ENCODE measurements at regions of chr1 and their contacts with region 1.

Region 1: GRCh38 chr1:223500560-223501425 is 107.6 kb downstream of the CCDC185 start:
- DNase-seq: peak; percentile 99
- ATAC-seq: peak; percentile 88
- H3K4me3 ChIP-seq: no peak overlapping the region
- H3K27ac ChIP-seq: peak overlapping the region; percentile 96
- H3K4me1 ChIP-seq: peaks cover 39% of the 10 kb centered on the region
- H3K27me3 ChIP-seq: no peaks in the 10 kb centered on the region
- CTCF ChIP-seq: no peak

Region 2: DNA sequence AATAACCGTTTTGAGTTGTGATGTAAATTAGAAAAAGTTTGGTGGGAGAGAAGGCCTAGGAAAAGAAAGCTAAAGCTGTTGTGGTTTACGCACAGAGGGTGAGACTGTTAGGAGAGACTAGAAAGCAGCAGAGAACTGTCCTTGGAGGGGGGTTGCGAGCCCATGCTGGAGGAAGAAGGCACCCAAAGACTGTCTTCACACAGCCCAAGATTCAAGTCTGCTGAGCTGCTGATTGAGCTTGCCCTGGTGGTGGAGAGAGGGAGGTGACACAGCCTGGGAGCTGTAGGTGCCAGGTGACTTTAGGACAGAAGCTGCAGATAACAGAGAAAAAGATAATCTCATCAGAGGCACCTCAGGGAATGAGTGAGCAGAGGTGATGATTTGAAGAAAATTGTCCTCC is 339.5 kb before region 1 on chr1:
- CTCF ChIA-PET with region 1: no interaction called
- POLR2A ChIA-PET with region 1: no interaction called
- intact Hi-C with region 1: no loop called
- DNase-seq: no peak
- ATAC-seq: no peak; the same call in 1 of the 2 replicates
- H3K4me3 ChIP-seq: no peak overlapping the region
- H3K27ac ChIP-seq: no peak overlapping the region
- H3K4me1 ChIP-seq: peaks cover 3% of the 10 kb centered on the region; the same call in 1 of the 2 replicates
- H3K27me3 ChIP-seq: peaks cover 40% of the 10 kb centered on the region
- CTCF ChIP-seq: no peak; the same call in 1 of the 2 replicates

Region 3: GRCh38 chr1:223515926-223516325 is 15.1 kb after region 1 on chr1:
- CTCF ChIA-PET with region 1: no interaction called
- POLR2A ChIA-PET with region 1: no interaction called
- intact Hi-C with region 1: loop called (anchors 1 kb)
- DNase-seq: no peak
- ATAC-seq: no peak
- H3K4me3 ChIP-seq: no peak overlapping the region
- H3K27ac ChIP-seq: no peak overlapping the region
- H3K4me1 ChIP-seq: no peaks in the 10 kb centered on the region
- H3K27me3 ChIP-seq: no peaks in the 10 kb centered on the region
- CTCF ChIP-seq: no peak